Activated B cell treated with CpG ODN at 0.5 μM for 24 hours (primary cell): ENCODE measurements at regions of chr2 and their contacts with region 1.

Region 1: DNA sequence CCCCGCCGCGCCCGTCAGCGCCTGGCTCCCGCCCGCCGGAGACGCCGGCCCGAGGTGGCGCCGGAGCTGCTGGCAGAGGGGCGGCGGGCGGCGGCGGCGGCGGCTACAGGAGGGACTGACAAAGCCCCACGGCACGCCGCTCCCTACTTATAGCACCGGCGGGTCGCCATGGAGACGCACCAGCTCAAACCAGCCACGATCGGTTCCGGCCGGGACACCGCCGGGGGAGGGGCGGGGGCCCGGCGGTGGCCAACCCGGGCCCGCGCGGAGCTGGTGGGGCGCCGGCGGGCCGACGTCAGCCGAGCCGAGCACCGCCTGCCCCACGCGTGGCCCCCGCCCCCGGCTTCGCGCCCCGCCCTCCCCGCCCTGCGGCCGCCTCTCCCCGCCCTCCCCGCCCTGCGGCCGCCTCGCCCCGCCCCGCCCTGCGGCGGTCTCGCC is at the start of gene ODC1:
- DNase-seq: peak; percentile 98
- ATAC-seq: peak; percentile 80
- H3K4me3 Mint-ChIP-seq: peak within 1 kb of the TSS; percentile 85
- H3K27ac Mint-ChIP-seq: peak within 1 kb of the TSS; percentile 85
- H3K4me1 Mint-ChIP-seq: peaks cover 44% of the 10 kb centered on the region
- H3K27me3 Mint-ChIP-seq: no peaks in the 10 kb centered on the region
- CTCF ChIP-seq: no peak
- total RNA-seq, gene ODC1: 192 and 200 TPM in 2 replicates

Region 2: DNA sequence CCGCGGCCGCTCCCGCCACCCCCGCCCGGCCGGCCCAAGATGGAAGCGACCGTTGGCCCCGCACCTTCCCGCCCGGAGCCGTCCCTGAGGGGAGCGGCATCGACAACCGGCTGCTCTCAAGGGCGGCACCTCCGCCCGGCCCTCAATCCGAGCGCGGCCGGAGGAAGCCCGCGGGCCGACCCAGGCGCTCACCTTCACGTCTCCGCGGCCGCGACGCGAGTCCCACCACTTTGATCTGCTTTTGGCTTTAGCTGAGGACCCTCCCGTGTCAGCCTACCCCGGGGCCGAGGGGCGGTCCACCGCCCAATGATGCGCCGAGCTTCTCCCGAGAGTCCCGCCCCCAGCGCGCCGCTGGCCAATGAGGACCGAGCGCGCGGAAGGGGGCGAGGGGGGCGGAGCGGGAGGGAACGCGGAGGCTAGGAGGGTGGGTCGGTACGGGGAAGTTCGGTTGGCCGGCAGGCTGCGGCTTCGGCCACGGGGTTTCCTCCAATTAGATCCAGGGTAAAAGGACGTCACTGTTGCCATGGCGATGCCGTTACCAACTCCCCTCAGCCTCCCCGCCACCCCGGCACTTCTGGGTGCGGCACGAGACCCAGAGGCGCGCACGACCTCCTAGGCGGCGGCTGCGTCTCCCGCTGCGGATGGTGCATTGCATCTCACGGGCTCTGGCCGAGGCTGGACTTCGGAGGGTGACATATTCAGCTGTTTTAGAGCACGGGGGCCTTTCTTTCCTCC is 817.3 kb before region 1 on chr2 and contains the start of gene YWHAQ:
- CTCF ChIA-PET with region 1: no interaction called
- POLR2A ChIA-PET with region 1: interaction called, 8 read pairs
- intact Hi-C with region 1: loop called (anchors 1 kb)
- DNase-seq: peak; percentile 99
- ATAC-seq: peak; percentile 92
- H3K4me3 Mint-ChIP-seq: peak within 1 kb of the TSS; percentile 92
- H3K27ac Mint-ChIP-seq: peak within 1 kb of the TSS; percentile 89
- H3K4me1 Mint-ChIP-seq: peaks cover 52% of the 10 kb centered on the region
- H3K27me3 Mint-ChIP-seq: no peaks in the 10 kb centered on the region
- CTCF ChIP-seq: no peak
- total RNA-seq, gene YWHAQ: 164 and 166 TPM in 2 replicates

Region 3: DNA sequence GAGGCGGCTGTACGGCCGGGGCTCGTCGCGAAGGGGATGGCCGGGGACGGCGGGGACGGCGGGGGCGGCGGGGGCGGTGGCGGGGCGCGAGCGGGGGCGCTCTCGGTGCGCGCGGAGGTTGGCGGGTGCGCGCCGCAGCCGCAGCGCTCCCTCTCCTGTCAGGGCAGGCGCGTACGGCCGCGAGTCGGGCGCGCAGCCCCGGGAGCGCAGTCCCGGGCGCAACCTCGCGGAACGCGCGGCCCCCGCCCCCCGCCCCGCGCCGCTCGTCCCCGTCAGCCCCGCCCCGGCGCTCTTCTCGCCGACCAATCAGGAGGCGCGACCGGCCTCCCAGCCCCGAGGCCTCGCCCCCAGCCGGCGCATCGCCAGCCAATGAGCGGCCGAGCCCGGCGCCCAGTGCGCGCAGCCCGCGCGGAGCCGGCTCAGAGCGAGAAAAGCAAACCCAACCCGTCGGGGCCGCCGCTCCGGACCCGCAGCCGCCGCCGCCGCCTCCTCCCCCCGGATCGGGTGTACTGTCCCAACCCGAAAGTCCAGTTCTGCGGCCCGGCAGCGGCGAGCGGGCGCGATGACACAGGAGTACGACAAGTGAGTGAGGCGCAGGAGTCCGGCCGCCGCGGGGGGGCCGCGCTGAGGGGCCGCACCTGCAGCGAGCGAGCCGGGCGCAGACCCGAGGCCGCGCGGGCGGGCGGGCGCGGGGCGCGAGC is 496.8 kb before region 1 on chr2 and contains the start of gene GRHL1:
- CTCF ChIA-PET with region 1: no interaction called
- POLR2A ChIA-PET with region 1: no interaction called
- intact Hi-C with region 1: loop called (anchors 2 kb)
- DNase-seq: peak; percentile 89
- ATAC-seq: peak; percentile 96
- H3K4me3 Mint-ChIP-seq: peak within 1 kb of the TSS; percentile 84
- H3K27ac Mint-ChIP-seq: peak within 1 kb of the TSS; percentile 65
- H3K4me1 Mint-ChIP-seq: peaks cover 14% of the 10 kb centered on the region
- H3K27me3 Mint-ChIP-seq: peaks cover 37% of the 10 kb centered on the region
- CTCF ChIP-seq: no peak
- total RNA-seq, gene GRHL1: 0.39 and 0.95 TPM in 2 replicates

Region 4: DNA sequence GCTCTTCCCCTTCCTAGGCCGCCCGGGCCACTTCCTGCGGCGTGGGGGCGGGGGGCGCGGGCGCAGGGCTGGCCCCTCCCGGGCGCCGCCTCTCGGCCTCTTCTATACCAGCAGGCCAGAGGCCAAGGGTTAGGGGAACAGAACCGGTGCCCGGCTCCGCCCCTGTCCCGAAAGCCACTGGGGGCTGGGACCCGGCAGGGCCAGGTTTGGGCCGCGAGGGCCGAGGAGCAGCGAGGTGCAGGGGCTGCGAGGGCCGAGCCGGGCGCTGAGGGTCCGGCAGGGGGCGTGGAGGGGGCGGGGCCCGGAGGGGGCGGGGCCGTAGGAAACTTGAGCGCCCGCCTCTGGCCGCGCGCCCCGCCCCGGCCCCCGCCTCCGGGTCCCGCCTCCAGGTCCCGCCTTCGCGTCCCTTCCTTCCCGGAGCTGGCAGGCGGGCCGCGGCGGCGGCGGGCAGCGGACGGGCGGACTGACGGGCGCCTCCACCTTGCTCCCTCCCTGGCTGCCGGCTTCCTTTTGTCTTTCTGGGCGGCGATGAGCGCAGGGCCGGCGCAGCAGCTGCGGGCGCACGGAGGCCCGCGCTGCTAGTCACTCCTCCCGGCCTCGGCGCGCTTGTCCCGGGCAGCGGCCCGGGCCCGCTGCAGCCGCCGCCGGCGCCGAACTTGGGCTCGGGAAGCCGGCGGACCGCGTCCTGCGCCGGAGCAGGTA is 145.6 kb before region 1 on chr2 and contains the start of gene HPCAL1:
- CTCF ChIA-PET with region 1: interaction called, 3 read pairs
- POLR2A ChIA-PET with region 1: interaction called, 23 read pairs
- intact Hi-C with region 1: loop called (anchors 1 kb)
- DNase-seq: peak; percentile 87
- ATAC-seq: peak; percentile 84
- H3K4me3 Mint-ChIP-seq: peak within 1 kb of the TSS; percentile 96
- H3K27ac Mint-ChIP-seq: peak within 1 kb of the TSS; percentile 80
- H3K4me1 Mint-ChIP-seq: peaks cover 58% of the 10 kb centered on the region
- H3K27me3 Mint-ChIP-seq: no peaks in the 10 kb centered on the region
- CTCF ChIP-seq: no peak
- total RNA-seq, gene HPCAL1: 15.2 and 15.9 TPM in 2 replicates

Region 5: GRCh38 chr2:10434886-10435819 is 13.1 kb before region 1 on chr2:
- CTCF ChIA-PET with region 1: interaction called, 22 read pairs
- POLR2A ChIA-PET with region 1: interaction called, 21 read pairs
- intact Hi-C with region 1: no loop called
- DNase-seq: peak; percentile 78
- ATAC-seq: peak; percentile 87
- H3K4me3 Mint-ChIP-seq: no peak overlapping the region
- H3K27ac Mint-ChIP-seq: no peak overlapping the region
- H3K4me1 Mint-ChIP-seq: peaks cover 15% of the 10 kb centered on the region
- H3K27me3 Mint-ChIP-seq: peaks cover 4% of the 10 kb centered on the region
- CTCF ChIP-seq: peak; percentile 45

Region 6: GRCh38 chr2:10750610-10751009 is 302.4 kb after region 1 on chr2:
- CTCF ChIA-PET with region 1: no interaction called
- POLR2A ChIA-PET with region 1: no interaction called
- intact Hi-C with region 1: loop called (anchors 1 kb)
- DNase-seq: no peak
- ATAC-seq: no peak
- H3K4me3 Mint-ChIP-seq: no peak overlapping the region
- H3K27ac Mint-ChIP-seq: no peak overlapping the region
- H3K4me1 Mint-ChIP-seq: peaks cover 18% of the 10 kb centered on the region
- H3K27me3 Mint-ChIP-seq: no peaks in the 10 kb centered on the region
- CTCF ChIP-seq: no peak

Region 7: GRCh38 chr2:11583840-11584524 is 1135.8 kb after region 1 on chr2:
- CTCF ChIA-PET with region 1: no interaction called
- POLR2A ChIA-PET with region 1: no interaction called
- intact Hi-C with region 1: loop called (anchors 10 kb)
- DNase-seq: no peak
- ATAC-seq: peak; percentile 89
- H3K4me3 Mint-ChIP-seq: no peak overlapping the region
- H3K27ac Mint-ChIP-seq: no peak overlapping the region
- H3K4me1 Mint-ChIP-seq: no peaks in the 10 kb centered on the region
- H3K27me3 Mint-ChIP-seq: peaks cover 8% of the 10 kb centered on the region
- CTCF ChIP-seq: no peak